Naive thymus-derived CD4-positive, alpha-beta T cell (primary cell): ENCODE measurements at regions of chr4 and their contacts with region 1.

Region 1: DNA sequence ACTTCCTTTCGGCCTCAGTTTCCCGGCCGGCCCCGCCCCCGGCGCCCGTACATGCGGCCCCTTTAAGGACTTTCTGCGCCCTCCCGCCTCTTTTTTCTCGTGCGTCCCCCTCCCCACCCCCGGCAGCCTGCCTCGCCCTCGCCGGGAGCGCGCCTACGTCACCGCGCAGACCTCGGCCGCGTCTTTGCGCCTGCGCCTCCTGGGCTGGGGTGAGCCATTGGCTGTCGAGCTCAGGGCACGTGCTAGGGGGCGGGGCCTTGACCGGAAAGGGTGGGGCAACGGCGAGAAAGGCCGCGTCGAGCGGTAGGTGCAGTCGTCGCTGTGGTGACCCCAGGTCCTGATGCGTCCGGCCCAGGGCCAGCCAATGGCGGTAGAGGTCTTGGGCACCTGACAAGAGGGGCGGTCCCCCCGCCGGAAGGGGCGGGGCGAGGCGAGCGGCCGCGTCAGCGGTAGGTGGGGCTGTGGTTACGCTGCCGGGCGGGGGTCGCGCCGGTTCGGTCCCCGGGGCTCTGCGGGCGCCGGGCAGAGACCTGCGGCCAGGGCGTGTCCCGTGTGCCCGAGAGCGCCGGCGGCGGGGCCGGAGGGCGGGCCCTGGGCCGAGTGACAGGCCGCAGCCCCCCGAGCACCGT is at the start of gene UVSSA:
- DNase-seq: peak; percentile 100
- ATAC-seq: peak; percentile 96
- H3K4me3 ChIP-seq: peak within 1 kb of the TSS; percentile 87
- H3K4me3 Mint-ChIP-seq: peak within 1 kb of the TSS; percentile 86 to 99 (median 95)
- H3K27ac ChIP-seq: peak within 1 kb of the TSS; percentile 94
- H3K27ac Mint-ChIP-seq: peak within 1 kb of the TSS; percentile 83 to 99 (median 95)
- H3K4me1 ChIP-seq: peaks cover 14 to 19% of the 10 kb centered on the region in 2 donors
- H3K4me1 Mint-ChIP-seq: peaks cover 34 to 53% (median 42%) of the 10 kb centered on the region in 7 donors
- H3K27me3 ChIP-seq: no peaks in the 10 kb centered on the region
- H3K27me3 Mint-ChIP-seq: no peaks in the 10 kb centered on the region
- total RNA-seq, gene UVSSA: 29.5 to 44.1 (median 39.7) TPM

Region 2: GRCh38 chr4:674172-675035 is 672.5 kb before region 1 on chr4 and contains the starts of genes ATP5ME and MYL5:
- CTCF ChIA-PET with region 1: no interaction called
- POLR2A ChIA-PET with region 1: no interaction called
- intact Hi-C with region 1: loop called (anchors 2 to 10 kb)
- DNase-seq: peak; percentile 97 to 100 (median 99)
- ATAC-seq: peak; percentile 96
- H3K4me3 ChIP-seq: peak within 1 kb of the TSS; percentile 88
- H3K4me3 Mint-ChIP-seq: peak within 1 kb of the TSS; percentile 84 to 92 (median 88)
- H3K27ac ChIP-seq: peak within 1 kb of the TSS; percentile 100
- H3K27ac Mint-ChIP-seq: peak within 1 kb of the TSS; percentile 80 to 91 (median 89)
- H3K4me1 ChIP-seq: peaks cover 7 to 16% of the 10 kb centered on the region in 2 donors
- H3K4me1 Mint-ChIP-seq: peaks cover 7 to 15% (median 8%) of the 10 kb centered on the region in 7 donors
- H3K27me3 ChIP-seq: no peaks in the 10 kb centered on the region
- H3K27me3 Mint-ChIP-seq: no peaks in the 10 kb centered on the region
- total RNA-seq, gene ATP5ME: 115 to 183 (median 123) TPM
- total RNA-seq, gene MYL5: 19.9 to 32.7 (median 23.8) TPM

Region 3: DNA sequence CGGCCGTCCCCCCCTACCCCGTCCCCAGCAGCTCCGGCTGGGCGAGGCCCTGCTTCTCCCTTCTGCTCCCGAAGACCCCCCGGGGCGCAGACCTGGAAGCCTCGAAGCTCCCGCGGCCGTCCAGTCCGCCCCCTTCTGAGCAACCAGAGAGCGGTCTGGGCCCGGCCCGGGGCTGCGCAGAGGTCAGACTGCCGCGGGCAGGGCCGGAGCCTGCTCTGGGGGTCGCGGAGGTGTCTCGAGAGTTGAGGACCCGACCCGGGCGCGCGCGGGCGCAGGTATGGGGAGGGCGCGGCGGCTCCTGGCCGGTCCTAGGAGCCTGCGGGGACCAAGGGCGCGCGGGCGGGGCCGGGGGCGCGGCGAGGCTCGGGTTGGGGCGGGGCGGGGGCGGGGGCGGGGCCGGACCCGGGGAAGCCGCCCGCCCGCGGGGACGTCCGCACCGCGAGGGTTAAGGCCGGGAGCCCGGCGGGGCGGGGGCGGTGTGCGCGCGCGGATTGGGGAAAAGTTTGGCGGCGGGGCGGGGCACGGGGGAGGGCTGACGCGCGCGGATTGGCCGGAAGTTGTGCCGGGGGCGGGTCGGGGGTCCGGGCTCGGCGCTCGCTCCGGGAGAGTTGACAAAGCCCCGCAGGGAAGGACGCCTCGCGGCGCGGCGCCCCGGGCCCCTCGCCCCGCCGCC is 335.7 kb before region 1 on chr4 and contains the start of gene FGFRL1:
- CTCF ChIA-PET with region 1: no interaction called
- POLR2A ChIA-PET with region 1: no interaction called
- intact Hi-C with region 1: loop called (anchors 1 to 2 kb)
- DNase-seq: peak; percentile 78 to 95 (median 87)
- ATAC-seq: peak; percentile 78
- H3K4me3 ChIP-seq: peak within 1 kb of the TSS; percentile 77
- H3K4me3 Mint-ChIP-seq: peak within 1 kb of the TSS; percentile 86 to 97 (median 89)
- H3K27ac ChIP-seq: peak within 1 kb of the TSS; percentile 83
- H3K27ac Mint-ChIP-seq: peak within 1 kb of the TSS; percentile 76 to 96 (median 92)
- H3K4me1 ChIP-seq: peaks cover 0 to 10% of the 10 kb centered on the region in 2 donors
- H3K4me1 Mint-ChIP-seq: peaks cover 15 to 21% (median 18%) of the 10 kb centered on the region in 7 donors
- H3K27me3 ChIP-seq: no peaks in the 10 kb centered on the region
- H3K27me3 Mint-ChIP-seq: peaks cover 24 to 31% (median 27%) of the 10 kb centered on the region in 5 donors
- total RNA-seq, gene FGFRL1: 10.6 to 28.1 (median 22.0) TPM

Region 4: GRCh38 chr4:1200425-1201035 is 146.4 kb before region 1 on chr4:
- CTCF ChIA-PET with region 1: no interaction called
- POLR2A ChIA-PET with region 1: interaction called, 7 read pairs
- intact Hi-C with region 1: loop called (anchors 1 kb)
- DNase-seq: peak in 1 of 9 donors; percentile 26
- ATAC-seq: no peak
- H3K4me3 ChIP-seq: peak overlapping the region; percentile 85
- H3K4me3 Mint-ChIP-seq: peak overlapping the region; percentile 29 to 93 (median 84)
- H3K27ac ChIP-seq: peak overlapping the region; percentile 68
- H3K27ac Mint-ChIP-seq: peak overlapping the region in 5 of 9 donors; percentile 19 to 99 (median 59)
- H3K4me1 ChIP-seq: peaks cover 21 to 59% of the 10 kb centered on the region in 2 donors
- H3K4me1 Mint-ChIP-seq: peaks cover 12 to 57% (median 43%) of the 10 kb centered on the region in 7 donors
- H3K27me3 ChIP-seq: no peaks in the 10 kb centered on the region
- H3K27me3 Mint-ChIP-seq: no peaks in the 10 kb centered on the region

Region 5: GRCh38 chr4:1309261-1310010 is 37.5 kb before region 1 on chr4:
- CTCF ChIA-PET with region 1: no interaction called
- POLR2A ChIA-PET with region 1: interaction called, 12 read pairs
- intact Hi-C with region 1: loop called (anchors 1 to 2 kb)
- DNase-seq: peak in 5 of 9 donors; percentile 17 to 58 (median 47)
- ATAC-seq: peak; percentile 74
- H3K4me3 ChIP-seq: peak overlapping the region; percentile 50
- H3K4me3 Mint-ChIP-seq: peak overlapping the region; percentile 74 to 89 (median 84)
- H3K27ac ChIP-seq: peak overlapping the region; percentile 53
- H3K27ac Mint-ChIP-seq: peak overlapping the region; percentile 66 to 89 (median 85)
- H3K4me1 ChIP-seq: peaks cover 21 to 38% of the 10 kb centered on the region in 2 donors
- H3K4me1 Mint-ChIP-seq: peaks cover 42 to 79% (median 63%) of the 10 kb centered on the region in 7 donors
- H3K27me3 ChIP-seq: no peaks in the 10 kb centered on the region
- H3K27me3 Mint-ChIP-seq: no peaks in the 10 kb centered on the region

Region 6: DNA sequence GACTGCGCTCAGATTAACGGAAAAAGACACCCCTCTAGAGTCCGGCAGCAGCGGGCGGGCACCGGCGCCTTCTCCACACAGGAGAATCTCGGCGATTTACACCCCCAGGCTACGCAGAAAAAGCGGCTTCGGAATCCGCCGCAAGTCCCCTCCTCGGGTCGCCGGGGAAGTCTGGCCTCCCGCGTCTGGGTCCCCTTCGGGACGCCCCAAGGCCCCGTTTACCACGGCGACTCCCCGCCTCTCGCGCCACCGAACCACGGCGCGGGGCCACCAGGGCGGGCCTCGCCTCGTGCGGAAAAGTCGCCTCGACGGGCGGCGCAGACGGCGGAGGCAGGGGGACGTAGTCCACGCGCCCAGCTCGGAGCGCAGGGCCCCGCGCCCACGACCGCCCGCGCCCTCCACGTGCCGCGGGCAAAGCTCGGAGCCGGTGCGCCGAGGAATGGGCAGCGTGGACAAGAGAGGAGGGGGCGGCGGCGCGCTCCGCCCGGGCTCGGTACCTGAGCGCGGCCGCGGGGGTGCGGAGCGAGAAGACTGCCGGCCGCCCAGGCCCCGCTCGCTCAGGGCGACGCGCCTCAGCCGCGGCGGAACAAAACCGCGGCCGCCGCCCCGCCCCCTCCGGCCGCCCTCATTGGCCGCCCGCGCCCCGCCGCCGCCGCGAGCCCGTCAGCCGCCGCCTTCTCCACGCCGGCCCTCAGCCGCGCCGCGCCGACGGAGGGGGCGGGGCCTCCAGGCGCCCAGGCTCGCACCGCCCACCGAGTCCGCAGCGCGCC is 337.0 kb after region 1 on chr4 and contains the start of gene FAM53A:
- CTCF ChIA-PET with region 1: no interaction called
- POLR2A ChIA-PET with region 1: no interaction called
- intact Hi-C with region 1: loop called in 1 of 2 experiments (anchors 1 kb)
- DNase-seq: peak in 5 of 9 donors; percentile 23 to 99 (median 88)
- ATAC-seq: peak; percentile 98
- H3K4me3 ChIP-seq: peak within 1 kb of the TSS; percentile 51
- H3K4me3 Mint-ChIP-seq: peak within 1 kb of the TSS; percentile 86 to 97 (median 93)
- H3K27ac ChIP-seq: peak within 1 kb of the TSS; percentile 62
- H3K27ac Mint-ChIP-seq: peak within 1 kb of the TSS; percentile 86 to 98 (median 91)
- H3K4me1 ChIP-seq: peaks cover 0 to 4% of the 10 kb centered on the region in 2 donors
- H3K4me1 Mint-ChIP-seq: peaks cover 9 to 15% (median 12%) of the 10 kb centered on the region in 7 donors
- H3K27me3 ChIP-seq: no peaks in the 10 kb centered on the region
- H3K27me3 Mint-ChIP-seq: peaks cover 0 to 9% (median 0%) of the 10 kb centered on the region in 5 donors
- total RNA-seq, gene FAM53A: 1.2 to 3.6 (median 1.4) TPM

Region 7: GRCh38 chr4:1870578-1871443 is 523.9 kb after region 1 on chr4 and contains the start of gene NSD2:
- CTCF ChIA-PET with region 1: no interaction called
- POLR2A ChIA-PET with region 1: no interaction called
- intact Hi-C with region 1: loop called in 1 of 2 experiments (anchors 5 kb)
- DNase-seq: peak; percentile 79 to 95 (median 86)
- ATAC-seq: peak; percentile 86
- H3K4me3 ChIP-seq: peak within 1 kb of the TSS; percentile 86
- H3K4me3 Mint-ChIP-seq: peak within 1 kb of the TSS; percentile 84 to 98 (median 89)
- H3K27ac ChIP-seq: peak within 1 kb of the TSS; percentile 99
- H3K27ac Mint-ChIP-seq: peak within 1 kb of the TSS; percentile 91 to 96 (median 95)
- H3K4me1 ChIP-seq: peaks cover 15 to 20% of the 10 kb centered on the region in 2 donors
- H3K4me1 Mint-ChIP-seq: peaks cover 12 to 37% (median 34%) of the 10 kb centered on the region in 7 donors
- H3K27me3 ChIP-seq: no peaks in the 10 kb centered on the region
- H3K27me3 Mint-ChIP-seq: peaks cover 0 to 4% (median 0%) of the 10 kb centered on the region in 5 donors
- total RNA-seq, gene NSD2: 35.4 to 207 (median 38.5) TPM